Mammary epithelial cell (primary cell): ENCODE measurements at regions of chr1 and their contacts with region 1.

Region 1: GRCh38 chr1:96362623-96363022 is 359.0 kb upstream of the PTBP2 start:
- DNase-seq: peak; percentile 98
- H3K4me3 ChIP-seq: no peak overlapping the region
- H3K27ac ChIP-seq: peak overlapping the region; percentile 68
- H3K4me1 ChIP-seq: peaks cover 39% of the 10 kb centered on the region
- H3K27me3 ChIP-seq: no peaks in the 10 kb centered on the region
- CTCF ChIP-seq: no peak

Region 2: GRCh38 chr1:96309783-96310182 is 52.8 kb before region 1 on chr1:
- CTCF ChIA-PET with region 1: no interaction called
- dilution Hi-C with region 1: no loop called
- in situ Hi-C with region 1: no loop called
- intact Hi-C with region 1: loop called (anchors 2 kb)
- DNase-seq: peak; percentile 81
- H3K4me3 ChIP-seq: no peak overlapping the region
- H3K27ac ChIP-seq: peak overlapping the region; percentile 40
- H3K4me1 ChIP-seq: peaks cover 22% of the 10 kb centered on the region
- H3K27me3 ChIP-seq: no peaks in the 10 kb centered on the region
- CTCF ChIP-seq: no peak

Region 3: GRCh38 chr1:96416111-96416595 is 53.5 kb after region 1 on chr1:
- CTCF ChIA-PET with region 1: no interaction called
- dilution Hi-C with region 1: no loop called
- in situ Hi-C with region 1: loop called in 1 of 2 experiments (anchors 10 kb)
- intact Hi-C with region 1: loop called (anchors 2 kb)
- DNase-seq: peak; percentile 97
- H3K4me3 ChIP-seq: no peak overlapping the region
- H3K27ac ChIP-seq: peak overlapping the region; percentile 69
- H3K4me1 ChIP-seq: peaks cover 11% of the 10 kb centered on the region
- H3K27me3 ChIP-seq: no peaks in the 10 kb centered on the region
- CTCF ChIP-seq: no peak

Region 4: GRCh38 chr1:96487394-96487793 is 124.8 kb after region 1 on chr1:
- CTCF ChIA-PET with region 1: no interaction called
- dilution Hi-C with region 1: no loop called
- in situ Hi-C with region 1: no loop called
- intact Hi-C with region 1: loop called (anchors 10 kb)
- DNase-seq: peak; percentile 80
- H3K4me3 ChIP-seq: no peak overlapping the region
- H3K27ac ChIP-seq: peak overlapping the region; percentile 89
- H3K4me1 ChIP-seq: peaks cover 26% of the 10 kb centered on the region
- H3K27me3 ChIP-seq: no peaks in the 10 kb centered on the region
- CTCF ChIP-seq: no peak

Region 5: GRCh38 chr1:96559707-96560596 is 197.3 kb after region 1 on chr1:
- CTCF ChIA-PET with region 1: no interaction called
- dilution Hi-C with region 1: no loop called
- in situ Hi-C with region 1: loop called in 1 of 2 experiments (anchors 25 kb)
- intact Hi-C with region 1: loop called (anchors 5 kb)
- DNase-seq: peak; percentile 99
- H3K4me3 ChIP-seq: no peak overlapping the region
- H3K27ac ChIP-seq: peak overlapping the region; percentile 88
- H3K4me1 ChIP-seq: peaks cover 17% of the 10 kb centered on the region
- H3K27me3 ChIP-seq: no peaks in the 10 kb centered on the region
- CTCF ChIP-seq: no peak

Region 6: GRCh38 chr1:96721416-96722160 is 359.0 kb after region 1 on chr1 and contains the start of gene PTBP2:
- CTCF ChIA-PET with region 1: no interaction called
- dilution Hi-C with region 1: no loop called
- in situ Hi-C with region 1: no loop called
- intact Hi-C with region 1: loop called (anchors 10 kb)
- DNase-seq: peak; percentile 71
- H3K4me3 ChIP-seq: peak within 1 kb of the TSS; percentile 82 to 98 (median 91)
- H3K27ac ChIP-seq: peak within 1 kb of the TSS; percentile 60
- H3K4me1 ChIP-seq: no peaks in the 10 kb centered on the region
- H3K27me3 ChIP-seq: no peaks in the 10 kb centered on the region
- CTCF ChIP-seq: no peak
- total RNA-seq, gene PTBP2: 13.0 to 13.6 TPM

Region 7: GRCh38 chr1:96973605-96974004 is 611.0 kb after region 1 on chr1:
- CTCF ChIA-PET with region 1: no interaction called
- dilution Hi-C with region 1: no loop called
- in situ Hi-C with region 1: no loop called
- intact Hi-C with region 1: no loop called
- DNase-seq: peak; percentile 48
- H3K4me3 ChIP-seq: no peak overlapping the region
- H3K27ac ChIP-seq: no peak overlapping the region
- H3K4me1 ChIP-seq: peaks cover 5% of the 10 kb centered on the region
- H3K27me3 ChIP-seq: peaks cover 3% of the 10 kb centered on the region
- CTCF ChIP-seq: no peak